ENCODE measurements at regions of chr16 and their contacts with region 1.

Region 1: DNA sequence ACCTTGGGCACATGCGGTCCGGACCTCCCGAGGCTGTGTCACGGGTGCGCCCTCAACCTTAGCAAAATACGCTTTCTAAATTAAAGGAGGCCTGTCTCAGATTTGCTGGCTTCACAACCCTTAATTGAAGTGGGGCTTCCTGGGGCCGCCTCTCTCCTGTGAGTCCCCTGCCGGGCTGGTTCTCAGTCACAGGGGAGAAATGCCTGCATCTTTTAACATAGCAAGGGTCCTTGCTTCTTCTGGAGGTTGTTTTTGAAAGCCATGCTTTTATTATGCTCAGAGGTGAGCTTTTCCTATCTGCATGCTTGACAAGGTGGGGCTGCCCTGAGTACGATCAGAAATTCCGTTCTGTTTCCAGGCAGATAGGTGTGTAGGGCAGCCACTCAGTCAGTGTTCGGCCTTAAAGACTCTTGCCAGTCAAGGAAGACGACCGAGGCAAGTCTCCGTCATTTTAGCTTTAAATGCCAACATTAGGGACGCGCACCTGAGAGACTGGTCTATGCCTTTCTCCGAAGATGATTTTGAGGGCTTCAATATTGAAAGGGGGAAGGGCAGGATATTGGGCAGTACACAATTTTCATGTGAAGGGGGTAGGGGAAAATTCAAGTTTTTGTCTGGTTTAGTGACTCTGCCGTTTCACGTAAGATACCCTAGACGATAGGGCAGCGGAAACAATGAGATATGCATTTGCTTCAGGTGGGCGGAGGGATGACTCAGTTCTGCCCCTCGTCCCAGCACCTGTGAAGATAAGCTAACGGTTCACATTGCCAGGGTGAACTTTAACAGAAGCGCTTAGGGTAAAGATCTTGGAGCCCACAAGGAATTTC is 5.5 kb upstream of the SLC7A5 start:
- DNase-seq: no peak
- H3K4me3 ChIP-seq: no peak overlapping the region
- H3K27ac ChIP-seq: no peak overlapping the region
- H3K4me1 ChIP-seq: no peaks in the 10 kb centered on the region
- H3K27me3 ChIP-seq: peaks cover 3 to 4% of the 10 kb centered on the region in 2 experiments
- CTCF ChIP-seq: no peak
- POLR2A ChIP-seq: no peak

Region 2: GRCh38 chr16:87834623-87835407 is 40.0 kb before region 1 on chr16:
- CTCF ChIA-PET with region 1: interaction called, 13 read pairs
- POLR2A ChIA-PET with region 1: interaction called, 12 read pairs
- dilution Hi-C with region 1: no loop called
- intact Hi-C with region 1: loop called (anchors 1 kb)
- DNase-seq: no peak
- H3K4me3 ChIP-seq: no peak overlapping the region
- H3K27ac ChIP-seq: no peak overlapping the region
- H3K4me1 ChIP-seq: peaks cover 24% of the 10 kb centered on the region
- H3K27me3 ChIP-seq: no peaks in the 10 kb centered on the region
- CTCF ChIP-seq: no peak
- POLR2A ChIP-seq: no peak

Region 3: DNA sequence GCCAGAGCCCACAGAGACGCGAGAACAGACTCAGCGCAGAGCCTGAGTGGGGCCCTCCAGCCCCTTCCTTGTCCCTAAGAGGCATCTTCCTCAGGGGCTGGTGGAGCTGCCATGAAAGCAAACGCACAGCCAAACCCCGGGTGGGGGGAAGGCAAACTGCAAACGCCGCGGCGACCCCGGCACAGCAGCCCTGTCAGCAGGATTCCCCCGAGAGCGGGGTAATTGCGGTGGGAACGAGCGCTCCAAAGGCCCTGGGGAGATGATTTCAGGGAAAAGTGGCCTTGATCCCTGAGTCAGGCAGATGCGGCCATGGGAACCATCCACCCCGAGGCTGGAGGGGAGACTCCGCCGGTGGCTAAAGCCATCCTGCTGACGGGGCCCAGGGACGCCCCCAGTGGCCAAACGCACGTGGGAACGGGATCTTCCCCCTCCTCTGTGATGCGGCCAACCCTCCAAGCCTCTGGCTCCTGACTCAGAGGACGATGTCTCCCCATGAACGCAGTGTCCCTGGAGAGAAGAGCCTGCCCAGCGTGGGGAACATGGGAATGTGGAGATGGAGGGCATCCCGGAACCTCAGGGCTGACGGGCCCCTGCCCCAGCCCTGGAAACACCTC is 30.6 kb before region 1 on chr16:
- CTCF ChIA-PET with region 1: interaction called, 108 read pairs
- POLR2A ChIA-PET with region 1: interaction called, 3 read pairs
- dilution Hi-C with region 1: no loop called
- intact Hi-C with region 1: no loop called
- DNase-seq: no peak
- H3K4me3 ChIP-seq: no peak overlapping the region
- H3K27ac ChIP-seq: no peak overlapping the region
- H3K4me1 ChIP-seq: peaks cover 9% of the 10 kb centered on the region
- H3K27me3 ChIP-seq: no peaks in the 10 kb centered on the region
- CTCF ChIP-seq: no peak
- POLR2A ChIP-seq: no peak

Region 4: GRCh38 chr16:87853411-87854052 is 21.3 kb before region 1 on chr16:
- CTCF ChIA-PET with region 1: interaction called, 108 read pairs
- POLR2A ChIA-PET with region 1: interaction called, 3 read pairs
- dilution Hi-C with region 1: no loop called
- intact Hi-C with region 1: loop called (anchors 1 kb)
- DNase-seq: peak; percentile 83
- H3K4me3 ChIP-seq: peak overlapping the region in 2 of 3 experiments; percentile 24 to 49
- H3K27ac ChIP-seq: peak overlapping the region; percentile 61
- H3K4me1 ChIP-seq: peaks cover 4% of the 10 kb centered on the region
- H3K27me3 ChIP-seq: no peaks in the 10 kb centered on the region
- CTCF ChIP-seq: no peak
- POLR2A ChIP-seq: no peak

Region 5: DNA sequence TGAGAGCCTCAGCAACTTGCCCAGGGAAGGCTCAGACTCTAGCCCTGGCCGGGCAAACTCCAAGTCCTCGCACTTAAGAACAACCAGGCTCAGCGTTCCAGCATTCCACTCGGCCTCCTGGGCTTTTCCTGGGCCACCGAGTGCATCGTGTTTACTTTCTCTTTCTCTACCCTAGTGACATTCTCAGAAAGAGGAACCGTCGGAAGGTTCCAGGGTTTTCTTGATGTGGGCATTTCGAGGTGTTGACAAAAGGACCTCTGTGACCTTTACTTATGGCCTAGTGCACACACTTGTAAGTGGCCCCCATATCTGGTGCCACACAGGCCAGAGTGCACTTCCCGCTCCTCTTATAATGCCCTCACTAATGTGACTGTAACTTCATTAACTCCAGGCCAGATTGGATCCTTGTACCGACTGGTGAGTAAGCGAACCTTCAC is 73.3 kb after region 1 on chr16:
- CTCF ChIA-PET with region 1: no interaction called
- POLR2A ChIA-PET with region 1: no interaction called
- dilution Hi-C with region 1: no loop called
- intact Hi-C with region 1: no loop called
- DNase-seq: no peak
- H3K4me3 ChIP-seq: no peak overlapping the region
- H3K27ac ChIP-seq: no peak overlapping the region
- H3K4me1 ChIP-seq: peaks cover 11% of the 10 kb centered on the region
- H3K27me3 ChIP-seq: no peaks in the 10 kb centered on the region
- CTCF ChIP-seq: no peak
- POLR2A ChIP-seq: no peak

Region 6: GRCh38 chr16:88468275-88469141 is 593.7 kb after region 1 on chr16:
- CTCF ChIA-PET with region 1: no interaction called
- POLR2A ChIA-PET with region 1: no interaction called
- dilution Hi-C with region 1: no loop called
- intact Hi-C with region 1: no loop called
- DNase-seq: peak; percentile 16
- H3K4me3 ChIP-seq: no peak overlapping the region
- H3K27ac ChIP-seq: no peak overlapping the region
- H3K4me1 ChIP-seq: peaks cover 20% of the 10 kb centered on the region
- H3K27me3 ChIP-seq: no peaks in the 10 kb centered on the region
- CTCF ChIP-seq: no peak
- POLR2A ChIP-seq: no peak